ENCODE measurements at regions of chr2 and their contacts with region 1.

Region 1: DNA sequence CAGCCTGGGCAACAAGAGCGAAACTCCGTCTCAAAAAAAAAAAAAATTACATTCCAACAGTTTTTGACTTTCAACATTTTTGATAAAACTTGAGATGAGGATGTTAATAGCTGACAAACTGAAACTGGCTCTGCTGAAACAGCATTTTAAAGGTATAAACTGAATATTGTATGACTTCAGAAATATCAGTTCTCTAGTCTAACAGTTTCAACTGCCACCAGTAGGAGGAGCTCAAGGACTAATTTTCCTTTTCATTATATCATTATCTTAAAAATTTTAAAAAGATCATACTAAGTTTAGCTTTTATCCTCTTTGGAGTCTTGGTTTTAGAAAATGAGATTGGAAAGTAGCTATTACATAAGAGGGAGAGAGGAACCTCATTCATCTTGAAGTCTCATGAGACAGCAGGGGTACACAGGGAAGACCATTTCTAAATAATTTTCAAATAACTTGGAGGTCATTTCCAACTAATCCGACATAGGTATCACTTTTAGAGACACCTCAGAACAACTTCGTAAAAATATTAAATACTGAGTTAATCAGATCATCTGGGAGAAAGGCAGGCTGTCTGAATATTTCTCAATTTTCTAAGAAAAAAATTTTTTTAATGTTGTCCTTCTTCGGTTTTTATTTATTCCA is 37.6 kb upstream of the MCM6 start:
- DNase-seq: peak; percentile 34
- H3K4me3 Mint-ChIP-seq: no peak overlapping the region
- H3K27ac Mint-ChIP-seq: no peak overlapping the region
- H3K4me1 Mint-ChIP-seq: no peaks in the 10 kb centered on the region
- H3K27me3 Mint-ChIP-seq: no peaks in the 10 kb centered on the region
- CTCF ChIP-seq: peak; percentile 74

Region 2: DNA sequence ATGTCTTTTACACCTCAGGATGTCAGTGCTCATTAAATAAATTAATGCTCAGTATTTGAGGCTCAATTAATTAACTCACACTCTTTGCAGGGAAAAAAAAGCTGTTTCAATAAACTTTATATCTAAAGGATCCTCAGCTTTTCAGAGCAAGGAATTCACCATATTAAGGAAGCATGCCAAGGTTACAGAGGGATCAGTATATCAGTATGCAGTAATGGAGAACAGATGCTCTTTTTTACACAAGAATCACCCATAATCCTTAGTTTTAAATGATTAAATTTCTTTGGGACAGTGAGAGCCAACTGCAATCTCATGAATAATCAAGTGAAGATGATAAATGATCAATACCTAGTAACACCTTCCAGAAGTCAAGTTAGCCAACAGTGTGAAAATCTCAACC is 62.0 kb before region 1 on chr2:
- CTCF ChIA-PET with region 1: no interaction called
- intact Hi-C with region 1: no loop called
- DNase-seq: no peak
- H3K4me3 Mint-ChIP-seq: no peak overlapping the region
- H3K27ac Mint-ChIP-seq: no peak overlapping the region
- H3K4me1 Mint-ChIP-seq: no peaks in the 10 kb centered on the region
- H3K27me3 Mint-ChIP-seq: no peaks in the 10 kb centered on the region
- CTCF ChIP-seq: no peak

Region 3: DNA sequence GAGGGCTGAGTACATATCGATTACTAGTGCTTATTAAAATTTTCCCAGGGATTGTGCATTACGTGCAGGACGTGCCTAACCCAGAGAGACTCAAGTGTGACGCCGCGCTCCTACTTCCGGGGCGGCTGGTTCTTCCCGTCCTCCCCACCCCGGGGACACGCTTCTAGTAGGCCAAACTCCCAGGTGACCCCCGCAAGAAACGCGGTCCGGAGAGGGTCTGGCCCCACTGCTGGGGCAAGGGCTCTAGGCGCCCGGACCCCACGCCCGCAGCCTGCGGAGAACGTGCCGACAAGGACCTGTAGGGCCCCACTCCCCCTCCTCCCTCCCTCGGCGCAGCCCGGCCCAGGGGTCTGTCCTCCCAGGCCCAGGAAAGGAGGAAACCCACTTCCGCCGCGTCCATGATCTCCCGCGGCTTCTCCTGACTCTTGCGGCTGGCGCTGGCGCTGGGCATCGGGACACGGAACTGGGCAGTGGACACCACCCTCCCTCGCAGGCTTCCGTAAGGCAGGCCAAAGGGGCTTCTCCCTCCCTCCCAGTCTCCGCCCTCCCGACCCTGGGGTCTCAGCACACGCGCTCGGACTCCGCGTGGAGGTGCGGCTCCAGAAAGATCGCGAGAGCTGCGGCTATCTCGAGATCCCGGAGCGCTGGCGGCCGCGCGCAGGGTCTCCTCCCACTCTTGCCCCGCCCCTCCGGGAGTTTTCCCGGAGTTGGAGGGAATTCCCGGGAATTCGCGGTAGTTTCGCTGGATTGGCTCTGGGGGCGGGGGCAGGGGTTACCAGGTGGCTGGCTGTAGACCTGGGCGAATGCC is 71.4 kb after region 1 on chr2 and contains the start of gene DARS1:
- CTCF ChIA-PET with region 1: no interaction called
- intact Hi-C with region 1: loop called (anchors 5 kb)
- DNase-seq: peak; percentile 93
- H3K4me3 Mint-ChIP-seq: peak within 1 kb of the TSS; percentile 85
- H3K27ac Mint-ChIP-seq: peak within 1 kb of the TSS; percentile 94
- H3K4me1 Mint-ChIP-seq: no peaks in the 10 kb centered on the region
- H3K27me3 Mint-ChIP-seq: no peaks in the 10 kb centered on the region
- CTCF ChIP-seq: no peak
- total RNA-seq, gene DARS1: 57.5 and 63.3 TPM in 2 replicates

Region 4: GRCh38 chr2:136378712-136379595 is 465.1 kb after region 1 on chr2:
- CTCF ChIA-PET with region 1: interaction called, 24 read pairs
- intact Hi-C with region 1: loop called (anchors 1 kb)
- DNase-seq: peak; percentile 66
- H3K4me3 Mint-ChIP-seq: no peak overlapping the region
- H3K27ac Mint-ChIP-seq: no peak overlapping the region
- H3K4me1 Mint-ChIP-seq: no peaks in the 10 kb centered on the region
- H3K27me3 Mint-ChIP-seq: no peaks in the 10 kb centered on the region
- CTCF ChIP-seq: peak; percentile 70

Region 5: DNA sequence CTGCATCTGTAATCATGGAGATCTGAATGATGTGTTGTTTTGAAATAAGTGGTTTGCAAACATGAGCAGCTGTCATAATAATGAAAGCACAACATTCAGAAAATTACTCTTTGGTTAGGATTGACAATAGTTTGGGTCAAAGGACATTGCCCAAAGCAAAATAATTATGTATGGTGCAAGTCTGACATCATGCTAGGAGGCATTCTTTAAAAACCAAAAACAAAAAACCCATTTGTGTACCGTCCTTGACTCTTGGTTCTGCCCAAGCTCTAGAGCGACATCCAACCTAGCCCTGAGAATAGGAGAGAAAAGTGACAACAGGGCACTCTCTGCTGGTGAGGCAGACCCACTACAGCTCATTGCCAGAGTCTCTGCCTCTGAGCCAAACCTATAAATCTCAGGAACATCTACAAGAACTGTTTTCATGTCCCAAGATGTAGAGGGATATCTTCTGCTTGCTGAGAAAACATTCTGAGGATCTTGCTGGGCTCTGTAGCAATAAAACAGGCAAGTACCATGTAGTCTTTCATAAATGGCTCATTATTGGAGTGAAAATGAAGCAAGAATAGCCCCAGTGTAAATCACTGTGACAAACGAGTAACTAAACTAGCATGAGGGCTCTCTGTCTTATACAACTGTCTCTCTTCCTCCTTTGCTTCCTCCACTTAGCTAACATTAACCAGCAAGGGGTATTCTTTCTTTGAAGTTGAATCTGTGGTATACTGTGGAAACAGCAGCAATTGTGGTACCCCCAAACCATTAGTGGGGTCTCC is 470.9 kb after region 1 on chr2:
- CTCF ChIA-PET with region 1: interaction called, 24 read pairs
- intact Hi-C with region 1: no loop called
- DNase-seq: peak; percentile 27
- H3K4me3 Mint-ChIP-seq: no peak overlapping the region
- H3K27ac Mint-ChIP-seq: no peak overlapping the region
- H3K4me1 Mint-ChIP-seq: no peaks in the 10 kb centered on the region
- H3K27me3 Mint-ChIP-seq: peaks cover 8% of the 10 kb centered on the region
- CTCF ChIP-seq: peak; percentile 34